GM12878 (cell line): ENCODE measurements at regions of chr19 and their contacts with region 1.

Region 1: DNA sequence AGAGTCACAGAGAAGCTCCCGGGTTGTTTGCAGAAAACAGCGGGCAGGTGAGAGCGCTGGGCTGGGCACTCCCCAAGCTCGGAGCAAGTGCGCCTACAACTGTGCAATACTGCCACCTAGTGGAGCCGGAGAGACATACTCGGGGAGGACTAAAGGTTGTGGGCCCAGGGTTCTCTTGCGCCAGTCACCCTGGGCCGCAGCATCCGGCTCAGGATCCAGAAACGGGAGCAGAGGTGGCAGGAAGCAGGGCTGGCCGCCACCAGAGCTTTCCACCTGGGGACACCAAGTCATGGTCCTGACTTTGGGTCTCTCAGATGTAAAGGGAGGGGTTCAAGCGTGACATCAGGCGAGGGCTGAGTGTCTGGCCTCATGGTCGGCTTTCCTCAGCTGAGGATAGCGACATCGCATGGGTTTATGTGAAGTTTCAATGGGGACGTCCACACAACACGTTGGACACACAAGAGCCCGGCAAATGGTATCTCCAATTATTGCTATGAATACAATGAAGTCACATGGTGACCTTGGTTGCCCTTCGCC is 11.2 kb upstream of the KLK4 start:
- DNase-seq: peak; percentile 27
- ATAC-seq: peak; percentile 100
- H3K4me3 ChIP-seq: no peak overlapping the region
- H3K27ac ChIP-seq: no peak overlapping the region
- H3K4me1 ChIP-seq: no peaks in the 10 kb centered on the region
- H3K27me3 ChIP-seq: no peaks in the 10 kb centered on the region
- CTCF ChIP-seq: peak; percentile 82 to 95 (median 85); a peak in 5 of 6 replicates
- EP300 ChIP-seq: no peak
- POLR2A ChIP-seq: no peak
- RAD21 ChIP-seq: peak; percentile 93

Region 2: DNA sequence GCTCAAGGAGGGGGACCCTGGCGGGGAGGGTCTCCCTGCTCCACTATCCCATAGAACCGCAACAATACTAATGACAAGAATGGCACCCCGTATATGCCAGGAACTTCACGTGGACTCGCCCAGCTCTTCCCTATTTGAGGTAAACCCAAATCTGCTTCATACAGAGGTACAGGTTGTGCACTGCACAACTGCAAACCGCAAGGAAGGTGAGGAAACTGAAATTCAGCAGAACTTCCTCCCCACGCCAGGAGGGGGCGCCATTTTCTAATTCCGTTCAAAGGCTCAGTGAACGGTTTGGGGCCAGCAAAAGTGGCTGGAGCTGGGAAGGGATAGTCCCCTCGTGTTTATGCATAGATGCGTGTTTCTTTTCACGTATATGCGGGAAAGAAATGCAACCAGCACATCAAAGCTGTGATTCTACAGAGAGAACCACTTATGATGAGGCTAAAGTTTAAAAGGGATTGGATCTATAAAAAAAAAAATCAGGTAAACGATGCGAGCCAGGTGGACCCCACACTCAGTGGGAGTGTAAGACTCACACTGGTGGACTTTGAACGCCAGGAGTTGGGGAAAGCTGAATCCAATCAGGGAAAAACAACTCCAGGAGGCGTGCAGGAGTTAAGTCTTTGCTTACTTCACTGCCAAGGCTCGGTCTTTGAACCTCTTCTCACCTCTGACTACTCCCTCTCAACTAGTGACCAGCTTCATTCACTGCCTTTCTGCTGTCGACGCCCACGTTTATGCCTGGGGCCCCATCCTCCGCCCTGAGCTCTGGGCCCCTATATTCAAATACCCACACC is 252.9 kb before region 1 on chr19:
- CTCF ChIA-PET with region 1: interaction called, 22 read pairs
- POLR2A ChIA-PET with region 1: no interaction called
- RAD21 ChIA-PET with region 1: interaction called, 12 read pairs
- SMC1A ChIA-PET with region 1: interaction called, 5 read pairs
- in situ Hi-C with region 1: no loop called
- intact Hi-C with region 1: no loop called
- DNase-seq: no peak
- ATAC-seq: no peak; the same call in 2 of the 3 replicates
- H3K4me3 ChIP-seq: no peak overlapping the region
- H3K27ac ChIP-seq: no peak overlapping the region
- H3K4me1 ChIP-seq: no peaks in the 10 kb centered on the region
- H3K27me3 ChIP-seq: peaks cover 4 to 6% of the 10 kb centered on the region in 2 experiments
- CTCF ChIP-seq: peak; percentile 58 to 73 (median 67)
- EP300 ChIP-seq: no peak
- POLR2A ChIP-seq: no peak
- RAD21 ChIP-seq: peak; percentile 17; the same call in 1 of the 2 replicates

Region 3: GRCh38 chr19:50794439-50795237 is 127.7 kb before region 1 on chr19:
- CTCF ChIA-PET with region 1: interaction called, 24 read pairs
- POLR2A ChIA-PET with region 1: interaction called, 5 read pairs
- RAD21 ChIA-PET with region 1: interaction called, 35 read pairs
- SMC1A ChIA-PET with region 1: interaction called, 13 read pairs
- in situ Hi-C with region 1: no loop called
- intact Hi-C with region 1: loop called (anchors 2 kb)
- DNase-seq: no peak
- ATAC-seq: peak; percentile 66
- H3K4me3 ChIP-seq: no peak overlapping the region
- H3K27ac ChIP-seq: no peak overlapping the region
- H3K4me1 ChIP-seq: peaks cover 5% of the 10 kb centered on the region
- H3K27me3 ChIP-seq: no peaks in the 10 kb centered on the region
- CTCF ChIP-seq: peak; percentile 33 to 56 (median 55); a peak in 5 of 6 replicates
- EP300 ChIP-seq: no peak
- POLR2A ChIP-seq: peak; percentile 82
- RAD21 ChIP-seq: peak; percentile 57

Region 4: DNA sequence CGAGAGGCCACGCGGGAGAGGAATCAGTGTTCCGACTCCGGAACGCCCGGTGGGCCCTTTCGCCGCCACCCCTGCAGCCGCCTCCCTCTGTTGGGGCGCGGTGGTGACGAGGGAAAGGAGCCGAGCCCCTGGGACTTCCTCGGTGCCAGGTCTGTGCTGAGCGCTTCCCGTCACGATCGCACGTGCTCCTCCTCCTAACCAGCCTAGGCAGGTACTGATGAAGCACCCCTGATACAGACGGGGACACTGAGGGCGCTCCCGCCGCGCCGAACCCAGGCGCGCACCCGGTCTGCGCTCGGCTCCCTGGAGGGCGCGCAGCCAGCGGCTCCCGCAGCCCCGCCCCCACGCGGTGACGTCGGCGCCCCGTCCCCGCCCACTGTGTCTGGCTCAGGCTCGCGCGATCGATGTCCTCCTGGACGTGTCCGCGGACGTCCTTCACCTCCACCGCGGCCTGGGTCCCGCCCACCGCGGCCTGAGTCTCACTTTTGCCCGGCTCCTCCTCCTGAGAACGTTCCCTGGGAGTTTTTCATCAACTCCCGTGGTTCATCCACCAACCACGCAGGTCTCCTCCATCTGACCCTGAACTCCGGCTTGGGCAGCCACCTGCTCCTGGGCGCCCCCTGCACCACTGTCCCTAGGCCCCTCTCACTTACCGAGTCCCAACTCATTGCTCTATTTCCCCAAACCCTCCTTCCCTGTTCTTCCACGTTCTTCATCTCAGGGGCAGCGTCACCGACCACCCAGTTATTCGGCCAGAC is 86.4 kb before region 1 on chr19:
- CTCF ChIA-PET with region 1: interaction called, 40 read pairs
- POLR2A ChIA-PET with region 1: no interaction called
- RAD21 ChIA-PET with region 1: interaction called, 41 read pairs
- SMC1A ChIA-PET with region 1: interaction called, 37 read pairs
- in situ Hi-C with region 1: no loop called
- intact Hi-C with region 1: loop called (anchors 1 kb)
- DNase-seq: peak; percentile 26
- ATAC-seq: peak; percentile 96
- H3K4me3 ChIP-seq: peak overlapping the region; percentile 71
- H3K27ac ChIP-seq: no peak overlapping the region
- H3K4me1 ChIP-seq: peaks cover 5% of the 10 kb centered on the region; the same call in 1 of the 2 replicates
- H3K27me3 ChIP-seq: no peaks in the 10 kb centered on the region
- CTCF ChIP-seq: no peak
- EP300 ChIP-seq: no peak
- POLR2A ChIP-seq: peak; percentile 89
- RAD21 ChIP-seq: no peak

Region 5: GRCh38 chr19:50896591-50897190 is 25.7 kb before region 1 on chr19:
- CTCF ChIA-PET with region 1: interaction called, 33 read pairs
- POLR2A ChIA-PET with region 1: no interaction called
- RAD21 ChIA-PET with region 1: interaction called, 19 read pairs
- SMC1A ChIA-PET with region 1: interaction called, 28 read pairs
- in situ Hi-C with region 1: no loop called
- intact Hi-C with region 1: no loop called
- DNase-seq: peak; percentile 100
- ATAC-seq: peak; percentile 96
- H3K4me3 ChIP-seq: peak overlapping the region; percentile 22; the same call in 1 of the 2 replicates
- H3K27ac ChIP-seq: peak overlapping the region; percentile 76
- H3K4me1 ChIP-seq: peaks cover 23% of the 10 kb centered on the region
- H3K27me3 ChIP-seq: no peaks in the 10 kb centered on the region
- CTCF ChIP-seq: no peak
- EP300 ChIP-seq: peak; percentile 98 to 100
- POLR2A ChIP-seq: peak; percentile 51
- RAD21 ChIP-seq: no peak